IMR-90 (cell line): ENCODE measurements at regions of chr20 and their contacts with region 1.

Region 1: DNA sequence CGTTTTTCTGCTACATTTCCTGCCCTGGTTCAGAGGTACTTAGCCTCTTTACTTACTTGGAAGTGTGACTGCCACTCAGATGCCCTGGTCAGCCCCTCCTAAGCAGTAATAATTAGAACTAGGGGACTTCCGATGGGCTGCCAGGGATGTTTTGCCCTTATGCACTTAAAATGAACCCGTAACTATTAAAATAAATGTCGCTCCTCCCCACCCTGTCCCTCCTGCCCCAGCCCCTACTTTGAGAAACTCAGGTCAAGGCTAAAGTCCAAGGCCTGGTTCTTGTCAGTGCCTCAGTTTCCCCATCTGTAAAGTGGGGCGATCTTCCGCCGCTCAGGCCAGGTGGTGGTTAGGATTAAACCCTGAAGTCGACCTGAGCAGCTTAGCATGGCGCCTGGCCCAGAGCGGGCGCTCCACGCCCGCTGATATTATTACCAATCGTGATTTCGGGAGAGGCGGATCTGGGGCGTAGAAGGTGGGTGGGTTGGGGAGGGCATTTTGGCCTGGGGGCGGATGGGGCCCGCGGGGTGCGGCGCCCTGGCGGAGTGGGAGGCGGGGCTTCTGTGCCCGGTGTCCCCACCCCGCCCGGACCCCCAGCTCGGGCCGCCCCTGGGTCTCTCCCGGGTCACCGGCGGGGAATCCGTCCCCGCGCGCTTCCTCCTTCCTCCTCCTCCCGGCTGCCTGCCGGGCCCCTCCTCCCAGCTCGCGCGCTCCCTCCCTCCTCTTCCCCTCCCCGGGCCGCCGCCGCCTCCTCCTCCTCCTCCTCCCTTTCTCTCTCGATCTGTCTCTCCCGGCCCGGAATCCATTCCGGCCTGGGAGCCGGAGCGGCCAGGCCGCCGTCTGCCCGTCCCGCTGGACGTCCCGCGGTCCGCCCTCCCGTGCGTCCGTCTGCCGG is at the start of gene SRC:
- DNase-seq: peak; percentile 60
- ATAC-seq: peak; percentile 94
- H3K4me3 ChIP-seq: peak within 1 kb of the TSS; percentile 70
- H3K27ac ChIP-seq: peak within 1 kb of the TSS; percentile 55
- H3K4me1 ChIP-seq: peaks cover 13% of the 10 kb centered on the region
- H3K27me3 ChIP-seq: no peaks in the 10 kb centered on the region
- CTCF ChIP-seq: no peak
- POLR2A ChIP-seq: peak; percentile 93
- RAD21 ChIP-seq: no peak
- total RNA-seq, gene SRC: 6.7 and 7.0 TPM in 2 replicates

Region 2: DNA sequence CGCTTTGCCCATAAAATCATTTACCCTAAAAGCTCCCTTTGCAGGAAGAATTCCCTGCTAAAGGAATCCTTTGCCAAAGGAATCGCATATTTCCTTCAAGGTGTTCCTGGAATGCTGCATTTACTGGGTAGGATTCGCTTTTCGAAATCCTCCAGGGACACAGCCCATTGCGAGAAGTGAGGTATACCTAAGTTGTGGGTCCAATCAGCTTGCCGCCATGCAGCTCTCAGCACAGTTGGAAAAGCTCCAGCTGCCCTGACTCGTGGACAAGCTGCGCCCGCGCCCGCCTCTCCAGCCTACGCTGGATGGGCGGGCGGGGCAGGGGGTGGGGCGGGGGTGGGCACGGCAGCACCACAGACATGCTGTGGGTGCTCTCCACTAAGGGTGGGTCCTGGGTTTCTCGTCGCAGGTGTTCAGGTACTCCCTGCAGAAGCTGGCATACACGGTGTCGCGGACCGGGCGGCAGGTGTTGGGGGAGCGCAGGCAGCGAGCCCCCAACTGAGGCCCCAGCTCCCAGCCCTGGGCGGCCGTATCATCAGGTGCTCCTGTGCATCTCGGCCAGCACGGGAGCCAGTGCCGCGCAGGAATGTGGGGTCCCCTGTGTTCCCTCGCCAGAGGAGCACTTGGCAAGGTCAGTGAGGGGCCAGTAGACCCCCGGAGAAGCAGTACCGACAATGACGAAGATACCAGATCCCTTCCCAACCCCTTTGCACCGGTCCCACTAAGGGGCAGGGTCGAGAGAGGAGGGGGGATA is 176.8 kb after region 1 on chr20:
- CTCF ChIA-PET with region 1: no interaction called
- POLR2A ChIA-PET with region 1: interaction called, 11 read pairs
- dilution Hi-C with region 1: no loop called
- in situ Hi-C with region 1: no loop called
- intact Hi-C with region 1: no loop called
- DNase-seq: peak; percentile 35
- ATAC-seq: no peak
- H3K4me3 ChIP-seq: no peak overlapping the region
- H3K27ac ChIP-seq: no peak overlapping the region
- H3K4me1 ChIP-seq: peaks cover 28% of the 10 kb centered on the region
- H3K27me3 ChIP-seq: no peaks in the 10 kb centered on the region
- CTCF ChIP-seq: no peak
- POLR2A ChIP-seq: no peak
- RAD21 ChIP-seq: no peak